ENCODE measurements at regions of chr9 and their contacts with region 1.

Region 1: GRCh38 chr9:93003552-93004407 is 54.7 kb upstream of the SUSD3 start:
- DNase-seq: no peak
- ATAC-seq: peak; percentile 83
- H3K4me3 Mint-ChIP-seq: no peak overlapping the region
- H3K27ac Mint-ChIP-seq: peak overlapping the region; percentile 30
- H3K4me1 Mint-ChIP-seq: peaks cover 18% of the 10 kb centered on the region
- H3K27me3 Mint-ChIP-seq: no peaks in the 10 kb centered on the region
- CTCF ChIP-seq: no peak

Region 2: DNA sequence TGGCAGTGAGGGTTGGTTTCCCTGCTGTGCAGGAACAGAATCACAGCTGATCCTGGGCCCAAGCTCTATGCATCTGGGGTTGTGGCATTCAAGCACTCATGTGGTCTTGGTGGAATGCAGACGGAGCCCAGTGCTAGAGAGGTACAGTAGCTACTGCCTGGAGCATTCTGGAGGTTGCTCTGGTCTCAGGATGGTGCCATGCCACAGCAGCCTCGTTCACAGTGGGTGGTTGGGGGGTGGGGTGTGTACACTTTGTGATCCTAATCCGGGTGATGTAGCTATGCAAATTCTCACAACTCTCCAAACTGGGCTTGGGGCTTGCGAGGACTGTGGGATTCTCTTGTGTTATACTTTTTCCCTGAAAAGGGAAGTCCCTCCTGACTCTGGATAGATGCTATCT is 11.2 kb before region 1 on chr9:
- CTCF ChIA-PET with region 1: interaction called, 11 read pairs
- POLR2A ChIA-PET with region 1: interaction called, 3 read pairs
- intact Hi-C with region 1: no loop called
- DNase-seq: no peak
- ATAC-seq: no peak
- H3K4me3 Mint-ChIP-seq: no peak overlapping the region
- H3K27ac Mint-ChIP-seq: no peak overlapping the region
- H3K4me1 Mint-ChIP-seq: peaks cover 90% of the 10 kb centered on the region
- H3K27me3 Mint-ChIP-seq: no peaks in the 10 kb centered on the region
- CTCF ChIP-seq: no peak

Region 3: DNA sequence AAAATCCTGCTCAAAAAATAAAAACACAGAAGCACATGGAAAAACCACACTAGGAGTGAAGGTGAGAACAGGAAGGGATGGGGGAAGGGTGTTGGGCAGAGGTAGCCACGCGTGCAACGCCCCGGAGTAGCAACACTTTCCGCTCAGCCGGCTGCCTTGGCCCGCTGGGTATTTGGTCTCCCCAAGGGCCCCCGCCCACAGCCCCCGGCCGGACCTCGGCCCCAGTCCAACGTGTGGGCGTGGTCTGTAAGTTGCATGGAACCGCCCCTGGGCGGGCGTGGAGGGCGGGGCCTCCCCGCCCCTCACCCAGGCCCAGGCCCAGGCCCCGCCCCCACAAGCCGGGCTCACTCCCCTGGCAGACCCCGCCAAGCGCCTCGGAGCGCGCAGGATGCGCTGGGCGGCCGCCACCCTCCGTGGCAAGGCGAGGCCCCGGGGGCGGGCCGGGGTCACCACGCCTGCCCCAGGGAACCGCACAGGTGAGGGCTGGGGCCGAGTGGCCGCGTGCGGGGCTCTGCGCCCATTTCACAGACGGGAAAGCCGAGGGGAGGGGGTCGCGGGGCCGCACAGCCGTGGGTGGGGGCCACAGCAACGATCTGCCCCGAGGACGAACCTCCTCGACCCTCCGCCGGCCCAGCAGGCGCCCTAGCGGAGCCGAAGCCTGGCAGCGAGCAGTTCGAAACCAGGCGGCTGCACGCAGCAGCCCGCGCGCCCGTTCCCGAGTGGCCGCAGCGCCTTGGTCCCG is 54.7 kb after region 1 on chr9 and contains the start of gene SUSD3:
- CTCF ChIA-PET with region 1: interaction called, 3 read pairs
- POLR2A ChIA-PET with region 1: no interaction called
- intact Hi-C with region 1: loop called (anchors 1 kb)
- DNase-seq: peak; percentile 73
- ATAC-seq: peak; percentile 75
- H3K4me3 Mint-ChIP-seq: peak within 1 kb of the TSS; percentile 87
- H3K27ac Mint-ChIP-seq: peak within 1 kb of the TSS; percentile 95
- H3K4me1 Mint-ChIP-seq: peaks cover 63% of the 10 kb centered on the region
- H3K27me3 Mint-ChIP-seq: no peaks in the 10 kb centered on the region
- CTCF ChIP-seq: no peak
- total RNA-seq, gene SUSD3: 9.1 and 12.9 TPM in 2 replicates

Region 4: DNA sequence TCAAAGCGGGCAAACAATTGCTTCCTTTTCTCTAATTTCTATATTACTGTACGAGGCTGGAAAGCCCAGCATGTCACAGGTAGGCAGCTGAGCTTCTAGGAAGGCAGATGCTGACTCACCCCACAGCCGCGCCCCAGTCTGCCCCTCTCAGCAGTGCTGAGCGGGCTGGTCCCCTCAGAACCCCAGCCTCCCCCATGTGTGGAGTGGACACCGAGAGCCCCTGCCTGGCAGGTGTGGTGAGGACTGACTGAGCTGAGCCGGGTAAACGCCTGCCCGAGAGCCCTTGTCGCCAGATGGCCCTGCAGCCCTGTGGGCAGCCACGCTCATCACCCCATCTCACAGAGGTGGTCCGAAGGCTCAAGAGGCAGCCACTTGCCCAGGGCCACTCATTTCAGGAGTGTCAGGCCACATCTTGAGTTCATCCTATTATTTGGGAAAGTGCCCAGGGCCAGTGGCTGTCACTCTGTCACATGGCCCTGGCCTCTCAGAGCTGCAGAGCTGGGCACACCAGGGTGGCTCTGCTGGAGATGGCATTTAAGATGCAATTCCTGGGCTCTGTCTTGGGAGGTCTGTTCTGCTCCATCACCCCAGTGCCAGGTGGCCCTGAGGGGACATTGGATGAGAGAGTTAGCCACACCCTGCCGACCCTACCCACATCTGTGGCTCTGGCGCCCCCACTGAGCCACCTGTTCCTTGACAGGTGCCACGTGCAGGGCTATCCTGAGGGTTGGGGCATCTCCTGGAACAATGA is 104.7 kb after region 1 on chr9:
- CTCF ChIA-PET with region 1: interaction called, 19 read pairs
- POLR2A ChIA-PET with region 1: no interaction called
- intact Hi-C with region 1: loop called (anchors 1 kb)
- DNase-seq: no peak
- ATAC-seq: peak; percentile 56
- H3K4me3 Mint-ChIP-seq: no peak overlapping the region
- H3K27ac Mint-ChIP-seq: no peak overlapping the region
- H3K4me1 Mint-ChIP-seq: peaks cover 28% of the 10 kb centered on the region
- H3K27me3 Mint-ChIP-seq: no peaks in the 10 kb centered on the region
- CTCF ChIP-seq: no peak